ENCODE measurements at regions of chr21 and their contacts with region 1.

Region 1: GRCh38 chr21:24935991-24936390 is 671.3 kb downstream of the MRPL39 start:
- DNase-seq: no peak
- ATAC-seq: no peak

Region 2: GRCh38 chr21:24976238-24976637 is 40.2 kb after region 1 on chr21:
- intact Hi-C with region 1: loop called (anchors 1 kb)
- DNase-seq: no peak
- ATAC-seq: no peak